Colonic mucosa (tissue), 4 donors: ENCODE measurements at regions of chr18 and their contacts with region 1.

Region 1: DNA sequence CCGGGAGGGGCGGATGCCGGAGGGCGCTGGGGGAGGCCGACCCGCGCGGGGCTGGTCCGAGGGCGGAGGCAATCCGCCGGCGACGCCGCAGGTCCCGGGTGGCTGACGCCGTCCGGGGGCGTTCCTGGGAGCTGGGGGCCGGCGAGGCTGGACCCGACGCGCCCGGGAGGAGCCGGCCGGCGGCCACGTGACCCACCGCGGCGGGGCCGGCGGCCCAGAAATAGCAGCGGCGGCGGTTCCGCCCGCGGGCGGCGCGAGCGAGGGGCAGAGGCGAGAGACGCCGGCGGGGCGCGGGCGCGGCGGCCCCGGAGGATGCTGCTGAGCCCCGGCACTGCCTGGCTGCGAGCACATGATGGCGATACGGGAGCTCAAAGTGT is at the start of gene RAB31:
- DNase-seq: peak; percentile 56
- H3K4me3 ChIP-seq: peak within 1 kb of the TSS; percentile 45
- H3K27ac ChIP-seq: peak within 1 kb of the TSS; percentile 51
- H3K4me1 ChIP-seq: peaks cover 5% of the 10 kb centered on the region
- H3K27me3 ChIP-seq: peaks cover 10% of the 10 kb centered on the region
- CTCF ChIP-seq: no peak
- total RNA-seq, gene RAB31: 4.7 to 16.0 TPM

Region 2: DNA sequence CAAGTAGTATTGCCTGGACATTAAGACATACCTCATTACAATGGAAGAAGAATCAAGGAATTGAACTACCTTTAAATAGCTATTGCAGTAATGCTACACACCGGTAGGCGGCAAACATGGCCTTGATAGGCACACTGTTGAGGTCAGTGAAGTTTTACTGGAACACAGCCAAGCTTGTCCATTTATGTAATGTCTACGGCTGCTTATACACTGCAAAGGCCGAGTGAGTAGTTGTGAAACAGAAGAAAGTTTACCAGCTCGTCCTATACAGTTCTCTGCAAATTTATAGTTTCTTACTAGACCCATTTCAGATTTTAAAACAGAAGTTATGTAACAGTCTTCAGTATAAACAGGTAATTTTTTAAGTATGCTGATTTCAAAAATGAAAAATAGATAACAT is 132.5 kb before region 1 on chr18:
- intact Hi-C with region 1: loop called (anchors 10 kb)
- DNase-seq: peak; percentile 86
- H3K4me3 ChIP-seq: no peak overlapping the region
- H3K27ac ChIP-seq: no peak overlapping the region
- H3K4me1 ChIP-seq: no peaks in the 10 kb centered on the region
- H3K27me3 ChIP-seq: no peaks in the 10 kb centered on the region
- CTCF ChIP-seq: peak; percentile 84

Region 3: DNA sequence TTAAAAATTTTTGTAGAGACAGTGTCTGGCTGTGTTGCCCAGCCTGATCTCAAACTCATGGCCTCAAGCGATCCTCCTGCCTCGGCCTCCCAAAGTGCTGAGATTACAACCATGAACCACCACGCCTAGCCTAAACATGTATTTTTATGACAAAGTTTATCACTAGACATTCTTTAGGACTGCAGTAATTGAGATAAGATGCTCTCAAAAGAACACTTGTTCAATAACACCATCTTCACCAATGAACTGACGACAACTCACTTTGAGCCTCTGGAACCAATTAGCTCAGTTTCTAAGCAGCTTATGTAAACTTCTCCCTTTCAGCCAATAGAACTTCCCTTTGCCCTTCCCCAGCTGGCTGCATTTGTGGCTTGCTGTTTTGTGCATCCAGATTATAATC is 78.3 kb before region 1 on chr18:
- intact Hi-C with region 1: loop called (anchors 10 kb)
- DNase-seq: no peak
- H3K4me3 ChIP-seq: no peak overlapping the region
- H3K27ac ChIP-seq: no peak overlapping the region
- H3K4me1 ChIP-seq: no peaks in the 10 kb centered on the region
- H3K27me3 ChIP-seq: no peaks in the 10 kb centered on the region
- CTCF ChIP-seq: no peak

Region 4: DNA sequence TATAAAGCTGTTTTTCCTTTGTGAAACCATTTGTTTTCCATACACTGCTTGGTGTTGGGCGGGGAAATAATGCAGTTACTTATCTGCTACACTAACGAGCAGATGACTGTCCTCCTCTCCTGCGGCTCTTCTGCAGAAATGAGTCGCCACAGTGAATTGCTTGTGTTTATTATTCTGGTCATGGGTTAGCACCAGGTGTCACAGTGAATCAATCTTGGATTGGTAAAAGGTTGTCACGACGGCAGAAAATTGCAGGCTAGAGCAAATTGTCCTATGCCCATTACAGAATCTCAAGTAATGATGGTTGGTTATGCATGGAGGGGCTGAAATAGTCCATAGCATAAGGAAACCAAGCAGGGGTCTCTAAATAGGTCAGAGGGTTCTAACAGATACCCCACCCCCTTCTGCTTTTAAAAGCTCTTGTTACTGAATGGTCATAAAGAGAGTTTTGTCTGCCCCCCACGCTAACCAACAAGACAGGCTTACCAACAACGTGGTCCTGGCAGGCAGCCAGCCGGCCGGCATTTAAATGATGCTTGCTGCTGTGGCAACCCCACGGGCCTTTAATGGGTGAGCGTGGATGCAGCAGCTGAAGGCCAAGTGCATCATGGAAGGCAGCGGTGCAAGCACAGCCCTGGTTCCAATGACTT is 29.6 kb after region 1 on chr18:
- intact Hi-C with region 1: no loop called
- DNase-seq: no peak
- H3K4me3 ChIP-seq: no peak overlapping the region
- H3K27ac ChIP-seq: no peak overlapping the region
- H3K4me1 ChIP-seq: peaks cover 4% of the 10 kb centered on the region
- H3K27me3 ChIP-seq: no peaks in the 10 kb centered on the region
- CTCF ChIP-seq: no peak

Region 5: DNA sequence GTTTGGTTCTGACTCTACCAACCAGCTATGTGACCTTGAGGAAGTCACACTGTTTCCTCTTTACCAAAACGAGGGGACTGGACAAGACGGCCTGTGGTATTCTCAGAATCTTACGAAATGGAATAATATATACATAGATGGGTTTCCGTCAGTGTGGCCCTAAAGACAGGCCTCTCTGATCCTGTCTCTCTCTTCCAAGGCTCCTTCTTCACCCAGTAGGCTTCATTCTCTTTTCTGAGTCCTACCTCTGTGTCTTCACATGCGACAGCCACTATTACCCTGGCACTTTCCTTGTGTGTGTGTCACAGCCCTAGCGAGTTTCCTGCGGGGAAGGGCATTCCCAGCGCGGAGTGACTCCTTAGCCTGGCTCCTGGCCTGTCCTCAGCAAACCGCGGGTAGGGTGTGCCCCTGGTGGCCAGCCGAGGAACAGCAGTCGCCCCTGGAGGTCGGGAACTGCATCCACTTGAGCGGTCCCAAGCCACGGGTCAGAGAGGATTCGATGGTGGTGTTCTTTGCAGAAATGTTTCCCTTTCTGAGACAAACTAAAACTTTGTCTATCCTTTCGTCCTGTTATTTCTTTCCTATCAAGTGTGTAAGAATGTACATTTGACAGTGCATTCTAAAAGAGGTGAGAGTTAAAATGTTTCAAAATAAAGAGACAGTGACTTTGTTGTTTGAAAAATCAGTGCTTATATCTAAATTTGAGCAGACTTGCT is 63.4 kb after region 1 on chr18:
- intact Hi-C with region 1: no loop called
- DNase-seq: peak; percentile 87
- H3K4me3 ChIP-seq: no peak overlapping the region
- H3K27ac ChIP-seq: no peak overlapping the region
- H3K4me1 ChIP-seq: no peaks in the 10 kb centered on the region
- H3K27me3 ChIP-seq: no peaks in the 10 kb centered on the region
- CTCF ChIP-seq: peak; percentile 94